ENCODE measurements at regions of chr2 and their contacts with region 1.

Region 1: DNA sequence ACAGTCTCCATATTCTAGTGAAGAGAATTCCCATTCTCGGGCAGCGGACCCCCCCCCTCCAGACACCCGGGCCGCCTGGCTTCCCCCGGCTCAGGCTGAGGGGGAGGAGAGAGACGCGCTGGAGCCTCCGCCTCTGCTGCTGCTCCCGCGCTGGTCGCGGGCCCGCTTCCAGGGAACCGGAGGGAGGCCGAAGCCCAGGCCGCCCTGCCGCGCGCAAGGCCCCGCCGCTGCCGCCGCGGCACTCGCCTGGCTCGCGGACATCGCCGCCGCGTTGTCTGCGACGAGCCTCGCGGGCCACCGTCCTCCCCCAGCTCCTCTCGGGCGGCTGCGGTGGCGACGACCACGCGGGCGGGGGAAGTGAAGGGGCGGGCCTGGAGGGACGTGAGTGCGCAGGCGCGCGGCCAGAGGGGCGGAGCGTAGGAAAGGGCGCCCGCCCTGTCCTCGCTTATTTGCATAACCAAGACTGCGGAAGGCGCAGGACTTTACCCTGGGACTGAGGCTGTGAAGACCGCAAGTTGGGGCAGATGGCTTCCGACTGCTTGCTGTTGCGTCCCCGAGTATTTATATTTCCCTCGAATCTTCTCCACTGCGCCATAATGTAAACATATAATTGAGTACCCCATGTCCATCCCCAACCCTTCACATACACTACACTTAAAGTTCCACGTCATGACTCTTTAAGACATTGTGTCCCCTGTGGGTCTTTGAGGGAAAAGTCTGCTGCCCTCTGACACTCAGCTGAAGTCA is at the start of gene ARL5A:
- DNase-seq: peak; percentile 99
- H3K4me3 Mint-ChIP-seq: peak within 1 kb of the TSS; percentile 94
- H3K27ac Mint-ChIP-seq: peak within 1 kb of the TSS; percentile 91
- H3K4me1 Mint-ChIP-seq: peaks cover 29% of the 10 kb centered on the region
- H3K27me3 Mint-ChIP-seq: peaks cover 5% of the 10 kb centered on the region
- total RNA-seq, gene ARL5A: 77.5 and 79.5 TPM in 2 replicates

Region 2: DNA sequence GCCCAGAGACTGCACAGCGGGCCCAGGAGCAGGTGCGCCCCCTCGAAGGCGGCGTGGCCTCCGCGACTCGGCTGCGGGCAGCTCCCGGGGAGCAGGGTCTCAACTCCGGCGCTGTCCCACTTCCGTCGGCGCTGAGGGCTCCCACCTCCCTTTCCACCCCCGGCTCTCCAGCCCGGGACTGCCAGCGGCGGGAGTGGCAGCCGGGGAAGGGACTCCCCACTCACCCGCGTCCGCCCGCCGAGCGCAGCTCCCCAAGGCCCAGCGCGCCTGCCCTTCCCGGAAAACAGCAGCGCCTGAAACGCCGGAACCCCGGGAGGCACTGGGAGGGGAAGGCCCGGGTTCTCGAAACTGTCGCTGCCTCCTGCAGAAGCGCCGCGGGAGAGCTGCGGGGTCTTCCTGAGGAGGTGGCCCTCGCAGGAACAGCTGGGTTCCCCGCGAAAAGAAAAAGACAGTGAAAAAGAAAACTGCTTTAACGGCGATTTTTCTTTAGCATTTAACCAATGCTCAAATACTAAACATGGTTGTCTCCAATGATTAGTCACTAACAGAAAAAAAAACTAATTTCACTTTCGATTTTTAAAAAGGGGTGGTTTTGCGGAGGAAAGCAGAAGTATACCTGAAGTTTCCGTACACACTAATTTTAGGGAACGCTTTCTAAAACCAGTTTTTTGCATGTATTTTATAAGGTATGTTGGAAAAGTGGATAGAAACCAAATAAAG is 538.8 kb before region 1 on chr2 and contains the start of gene NMI:
- intact Hi-C with region 1: loop called (anchors 1 kb)
- DNase-seq: peak; percentile 93
- H3K4me3 Mint-ChIP-seq: peak within 1 kb of the TSS; percentile 86
- H3K27ac Mint-ChIP-seq: peak within 1 kb of the TSS; percentile 97
- H3K4me1 Mint-ChIP-seq: peaks cover 33% of the 10 kb centered on the region
- H3K27me3 Mint-ChIP-seq: no peaks in the 10 kb centered on the region
- total RNA-seq, gene NMI: 36.7 and 37.2 TPM in 2 replicates

Region 3: GRCh38 chr2:151315381-151315903 is 512.9 kb before region 1 on chr2:
- intact Hi-C with region 1: no loop called
- DNase-seq: no peak
- H3K4me3 Mint-ChIP-seq: no peak overlapping the region
- H3K27ac Mint-ChIP-seq: no peak overlapping the region
- H3K4me1 Mint-ChIP-seq: peaks cover 15% of the 10 kb centered on the region
- H3K27me3 Mint-ChIP-seq: peaks cover 2% of the 10 kb centered on the region

Region 4: DNA sequence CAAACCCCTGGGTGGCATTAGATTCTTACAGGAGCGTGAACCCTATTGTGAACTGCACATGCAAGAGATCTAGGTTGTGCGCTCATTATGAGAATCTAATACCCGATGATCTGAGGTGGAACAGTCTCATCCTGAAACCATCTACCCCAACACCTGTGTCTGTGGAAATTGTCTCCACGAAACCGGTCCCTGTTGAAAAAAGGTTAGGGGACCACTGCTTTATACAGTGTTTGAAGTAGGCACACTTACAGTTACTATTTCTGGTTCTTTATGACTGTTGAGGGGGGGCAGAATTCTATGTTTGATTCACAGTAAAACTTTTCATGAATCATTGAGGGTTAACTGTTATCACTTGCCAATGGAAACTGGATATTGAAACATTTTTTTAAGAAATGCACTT is 346.6 kb before region 1 on chr2:
- intact Hi-C with region 1: loop called (anchors 5 kb)
- DNase-seq: no peak
- H3K4me3 Mint-ChIP-seq: no peak overlapping the region
- H3K27ac Mint-ChIP-seq: peak overlapping the region; percentile 80
- H3K4me1 Mint-ChIP-seq: peaks cover 17% of the 10 kb centered on the region
- H3K27me3 Mint-ChIP-seq: no peaks in the 10 kb centered on the region

Region 5: GRCh38 chr2:151638191-151638933 is 190.0 kb before region 1 on chr2:
- intact Hi-C with region 1: loop called (anchors 10 kb)
- DNase-seq: peak; percentile 75
- H3K4me3 Mint-ChIP-seq: peak overlapping the region; percentile 79
- H3K27ac Mint-ChIP-seq: peak overlapping the region; percentile 92
- H3K4me1 Mint-ChIP-seq: peaks cover 26% of the 10 kb centered on the region
- H3K27me3 Mint-ChIP-seq: no peaks in the 10 kb centered on the region

Region 6: GRCh38 chr2:151999053-151999452 is 170.7 kb after region 1 on chr2:
- intact Hi-C with region 1: loop called (anchors 5 kb)
- DNase-seq: peak; percentile 77
- H3K4me3 Mint-ChIP-seq: no peak overlapping the region
- H3K27ac Mint-ChIP-seq: no peak overlapping the region
- H3K4me1 Mint-ChIP-seq: peaks cover under 1% of the 10 kb centered on the region
- H3K27me3 Mint-ChIP-seq: peaks cover 2% of the 10 kb centered on the region

Region 7: DNA sequence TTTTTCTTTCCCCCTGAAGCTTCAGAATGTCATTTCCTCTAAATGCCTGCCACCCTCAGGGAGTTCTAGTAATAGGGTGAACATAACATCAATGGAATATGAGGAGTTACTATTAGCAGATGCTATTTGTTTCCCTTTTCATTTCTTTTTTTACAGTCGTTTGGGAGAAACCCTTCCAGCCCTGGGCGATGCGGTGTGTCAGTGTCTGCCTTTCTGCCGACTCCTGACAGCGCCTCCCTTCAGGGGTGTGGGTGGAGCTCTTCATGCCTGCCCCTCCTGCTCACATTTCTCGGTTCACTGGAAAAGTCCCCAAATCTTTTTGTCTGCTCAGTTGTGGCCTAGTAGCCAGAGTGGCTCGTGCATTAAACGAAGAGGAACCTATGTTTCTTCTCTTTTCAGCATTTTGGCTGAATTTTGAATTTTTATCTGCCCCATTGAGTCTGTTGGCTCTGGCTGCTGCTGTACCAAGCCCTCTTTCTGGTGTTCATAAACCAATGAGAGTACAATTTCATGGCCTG is 578.9 kb after region 1 on chr2:
- intact Hi-C with region 1: loop called (anchors 10 kb)
- DNase-seq: peak; percentile 81
- H3K4me3 Mint-ChIP-seq: peak overlapping the region; percentile 78
- H3K27ac Mint-ChIP-seq: peak overlapping the region; percentile 91
- H3K4me1 Mint-ChIP-seq: peaks cover 54% of the 10 kb centered on the region
- H3K27me3 Mint-ChIP-seq: no peaks in the 10 kb centered on the region

Region 8: GRCh38 chr2:152717228-152718075 is 889.1 kb after region 1 on chr2 and contains the start of gene PRPF40A:
- intact Hi-C with region 1: loop called (anchors 10 kb)
- DNase-seq: peak; percentile 100
- H3K4me3 Mint-ChIP-seq: peak within 1 kb of the TSS; percentile 98
- H3K27ac Mint-ChIP-seq: peak within 1 kb of the TSS; percentile 98
- H3K4me1 Mint-ChIP-seq: peaks cover 48% of the 10 kb centered on the region
- H3K27me3 Mint-ChIP-seq: peaks cover 2% of the 10 kb centered on the region
- total RNA-seq, gene PRPF40A: 166 TPM in 2 replicates